Naive thymus-derived CD4-positive, alpha-beta T cell (primary cell): ENCODE measurements at regions of chr15 and their contacts with region 1.

Region 1: GRCh38 chr15:63288778-63289378 is 11.5 kb downstream of the APH1B start:
- DNase-seq: peak in 7 of 9 donors; percentile 30 to 68 (median 52)
- ATAC-seq: peak; percentile 79
- H3K4me3 ChIP-seq: no peak overlapping the region
- H3K4me3 Mint-ChIP-seq: peak overlapping the region in 1 of 10 donors; percentile 6
- H3K27ac ChIP-seq: no peak overlapping the region
- H3K27ac Mint-ChIP-seq: peak overlapping the region in 4 of 9 donors; percentile 12 to 64 (median 59)
- H3K4me1 ChIP-seq: no peaks in the 10 kb centered on the region
- H3K4me1 Mint-ChIP-seq: peaks cover 5 to 10% (median 7%) of the 10 kb centered on the region in 7 donors
- H3K27me3 ChIP-seq: no peaks in the 10 kb centered on the region
- H3K27me3 Mint-ChIP-seq: no peaks in the 10 kb centered on the region

Region 2: GRCh38 chr15:62912808-62913207 is 376.1 kb before region 1 on chr15:
- CTCF ChIA-PET with region 1: no interaction called
- POLR2A ChIA-PET with region 1: no interaction called
- intact Hi-C with region 1: no loop called
- DNase-seq: no peak
- ATAC-seq: no peak
- H3K4me3 ChIP-seq: no peak overlapping the region
- H3K4me3 Mint-ChIP-seq: no peak overlapping the region
- H3K27ac ChIP-seq: no peak overlapping the region
- H3K27ac Mint-ChIP-seq: no peak overlapping the region
- H3K4me1 ChIP-seq: no peaks in the 10 kb centered on the region
- H3K4me1 Mint-ChIP-seq: no peaks in the 10 kb centered on the region
- H3K27me3 ChIP-seq: no peaks in the 10 kb centered on the region
- H3K27me3 Mint-ChIP-seq: peaks cover 5 to 42% (median 20%) of the 10 kb centered on the region in 5 donors

Region 3: GRCh38 chr15:63048115-63048775 is 240.6 kb before region 1 on chr15:
- CTCF ChIA-PET with region 1: no interaction called
- POLR2A ChIA-PET with region 1: no interaction called
- intact Hi-C with region 1: loop called (anchors 2 to 5 kb)
- DNase-seq: peak; percentile 72 to 90 (median 85)
- ATAC-seq: peak; percentile 92
- H3K4me3 ChIP-seq: peak overlapping the region; percentile 76
- H3K4me3 Mint-ChIP-seq: peak overlapping the region; percentile 84 to 97 (median 94)
- H3K27ac ChIP-seq: peak overlapping the region; percentile 59
- H3K27ac Mint-ChIP-seq: peak overlapping the region; percentile 25 to 85 (median 68)
- H3K4me1 ChIP-seq: peaks cover 7 to 16% of the 10 kb centered on the region in 2 donors
- H3K4me1 Mint-ChIP-seq: peaks cover 13 to 42% (median 26%) of the 10 kb centered on the region in 7 donors
- H3K27me3 ChIP-seq: peaks cover 17 to 27% of the 10 kb centered on the region in 2 donors
- H3K27me3 Mint-ChIP-seq: peaks cover 30 to 60% (median 36%) of the 10 kb centered on the region in 5 donors

Region 4: DNA sequence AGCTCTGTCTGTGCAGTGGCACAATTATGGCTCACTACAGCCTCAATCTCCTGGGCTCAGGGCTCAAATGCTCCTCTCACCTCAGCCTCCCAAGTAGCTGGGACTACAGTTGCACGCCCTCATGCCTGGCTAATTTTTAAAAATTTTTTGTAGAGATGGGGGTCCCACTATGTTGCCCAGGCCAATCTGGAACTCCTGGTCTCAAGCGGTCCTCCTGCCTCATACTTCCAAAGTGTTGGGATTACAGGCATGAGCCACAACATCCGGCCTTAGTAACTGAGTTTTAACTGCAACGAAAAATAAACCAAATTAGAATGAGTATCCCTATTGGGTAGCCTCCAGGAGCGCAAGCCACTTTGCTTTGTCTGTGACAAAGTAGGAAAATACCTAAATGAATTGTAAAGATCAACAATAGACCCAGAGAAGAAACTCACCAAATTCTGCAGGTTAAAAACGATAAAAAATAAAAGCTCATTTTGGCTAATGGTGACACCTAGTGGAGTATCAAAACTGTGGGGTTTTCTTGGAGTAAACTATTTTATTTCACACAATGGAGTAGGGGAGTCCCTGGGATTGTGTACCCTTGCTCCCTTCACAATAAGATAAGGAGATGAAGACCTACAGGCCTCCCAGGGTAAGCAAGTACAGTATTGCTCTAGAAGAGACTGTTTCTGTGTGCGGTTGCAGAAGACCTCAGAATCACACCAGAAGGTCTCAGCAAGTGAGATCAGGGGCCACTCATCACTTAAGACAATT is 113.8 kb after region 1 on chr15:
- CTCF ChIA-PET with region 1: interaction called, 9 read pairs
- POLR2A ChIA-PET with region 1: no interaction called
- intact Hi-C with region 1: loop called (anchors 1 kb)
- DNase-seq: peak in 6 of 9 donors; percentile 7 to 60 (median 50)
- ATAC-seq: peak; percentile 67
- H3K4me3 ChIP-seq: no peak overlapping the region
- H3K4me3 Mint-ChIP-seq: no peak overlapping the region
- H3K27ac ChIP-seq: no peak overlapping the region
- H3K27ac Mint-ChIP-seq: no peak overlapping the region
- H3K4me1 ChIP-seq: peaks cover 0 to 3% of the 10 kb centered on the region in 2 donors
- H3K4me1 Mint-ChIP-seq: peaks cover 0 to 19% (median 0%) of the 10 kb centered on the region in 7 donors
- H3K27me3 ChIP-seq: no peaks in the 10 kb centered on the region
- H3K27me3 Mint-ChIP-seq: peaks cover 0 to 6% (median 4%) of the 10 kb centered on the region in 5 donors

Region 5: GRCh38 chr15:63466378-63467192 is 177.7 kb after region 1 on chr15:
- CTCF ChIA-PET with region 1: interaction called, 3 read pairs
- POLR2A ChIA-PET with region 1: no interaction called
- intact Hi-C with region 1: loop called in 1 of 2 experiments (anchors 1 kb)
- DNase-seq: peak in 8 of 9 donors; percentile 46 to 80 (median 74)
- ATAC-seq: peak; percentile 95
- H3K4me3 ChIP-seq: no peak overlapping the region
- H3K4me3 Mint-ChIP-seq: peak overlapping the region in 2 of 10 donors; percentile 5 to 6
- H3K27ac ChIP-seq: no peak overlapping the region
- H3K27ac Mint-ChIP-seq: peak overlapping the region; percentile 37 to 96 (median 82)
- H3K4me1 ChIP-seq: peaks cover 0 to 4% of the 10 kb centered on the region in 2 donors
- H3K4me1 Mint-ChIP-seq: peaks cover 12 to 43% (median 33%) of the 10 kb centered on the region in 7 donors
- H3K27me3 ChIP-seq: no peaks in the 10 kb centered on the region
- H3K27me3 Mint-ChIP-seq: peaks cover 0 to 18% (median 0%) of the 10 kb centered on the region in 5 donors

Region 6: GRCh38 chr15:63610200-63610841 is 321.4 kb after region 1 on chr15:
- CTCF ChIA-PET with region 1: no interaction called
- POLR2A ChIA-PET with region 1: no interaction called
- intact Hi-C with region 1: loop called in 1 of 2 experiments (anchors 5 kb)
- DNase-seq: peak in 8 of 9 donors; percentile 43 to 71 (median 64)
- ATAC-seq: peak; percentile 94
- H3K4me3 ChIP-seq: no peak overlapping the region
- H3K4me3 Mint-ChIP-seq: peak overlapping the region in 7 of 10 donors; percentile 9 to 68 (median 42)
- H3K27ac ChIP-seq: peak overlapping the region; percentile 69
- H3K27ac Mint-ChIP-seq: peak overlapping the region; percentile 74 to 94 (median 84)
- H3K4me1 ChIP-seq: peaks cover 23 to 25% of the 10 kb centered on the region in 2 donors
- H3K4me1 Mint-ChIP-seq: peaks cover 23 to 51% (median 41%) of the 10 kb centered on the region in 7 donors
- H3K27me3 ChIP-seq: no peaks in the 10 kb centered on the region
- H3K27me3 Mint-ChIP-seq: no peaks in the 10 kb centered on the region

Region 7: GRCh38 chr15:63668601-63669000 is 379.7 kb after region 1 on chr15:
- CTCF ChIA-PET with region 1: no interaction called
- POLR2A ChIA-PET with region 1: no interaction called
- intact Hi-C with region 1: loop called in 1 of 2 experiments (anchors 2 kb)
- DNase-seq: peak in 6 of 9 donors; percentile 22 to 63 (median 52)
- ATAC-seq: peak; percentile 83
- H3K4me3 ChIP-seq: peak overlapping the region; percentile 36
- H3K4me3 Mint-ChIP-seq: peak overlapping the region; percentile 31 to 82 (median 78)
- H3K27ac ChIP-seq: peak overlapping the region; percentile 52
- H3K27ac Mint-ChIP-seq: peak overlapping the region; percentile 89 to 96 (median 92)
- H3K4me1 ChIP-seq: peaks cover 17 to 25% of the 10 kb centered on the region in 2 donors
- H3K4me1 Mint-ChIP-seq: peaks cover 22 to 56% (median 50%) of the 10 kb centered on the region in 7 donors
- H3K27me3 ChIP-seq: no peaks in the 10 kb centered on the region
- H3K27me3 Mint-ChIP-seq: no peaks in the 10 kb centered on the region